HEK293T (cell line): ENCODE measurements at regions of chr7 and their contacts with region 1.

Region 1: GRCh38 chr7:108468246-108468645 is 12.0 kb upstream of the NRCAM start:
- DNase-seq: no peak

Region 2: GRCh38 chr7:108561047-108561619 is 92.9 kb after region 1 on chr7:
- CTCF ChIA-PET with region 1: interaction called, 11 read pairs
- POLR2A ChIA-PET with region 1: no interaction called
- DNase-seq: no peak